Gastrocnemius medialis (tissue), 4 donors: ENCODE measurements at regions of chr22 and their contacts with region 1.

Region 1: GRCh38 chr22:28594797-28595462 is 84.7 kb downstream of the TTC28 start:
- DNase-seq: no peak
- ATAC-seq: peak; percentile 83 to 97
- H3K4me3 ChIP-seq: no peak overlapping the region
- H3K27ac ChIP-seq: no peak overlapping the region
- H3K4me1 ChIP-seq: no peaks in the 10 kb centered on the region
- H3K27me3 ChIP-seq: no peaks in the 10 kb centered on the region
- CTCF ChIP-seq: peak; percentile 68 to 89 (median 71)
- POLR2A ChIP-seq: no peak

Region 2: GRCh38 chr22:26756675-26757293 is 1838.1 kb before region 1 on chr22:
- in situ Hi-C with region 1: no loop called
- intact Hi-C with region 1: loop called (anchors 10 kb)
- DNase-seq: no peak
- ATAC-seq: peak; percentile 33 to 70
- H3K4me3 ChIP-seq: peak overlapping the region in 1 of 4 donors; percentile 32
- H3K27ac ChIP-seq: no peak overlapping the region
- H3K4me1 ChIP-seq: peaks cover 0 to 3% of the 10 kb centered on the region in 2 donors
- H3K27me3 ChIP-seq: no peaks in the 10 kb centered on the region
- CTCF ChIP-seq: peak; percentile 79 to 95 (median 88)
- POLR2A ChIP-seq: no peak

Region 3: GRCh38 chr22:27880778-27881394 is 714.0 kb before region 1 on chr22:
- in situ Hi-C with region 1: loop called (anchors 10 to 25 kb)
- intact Hi-C with region 1: loop called (anchors 10 kb)
- DNase-seq: no peak
- ATAC-seq: peak; percentile 81 to 85
- H3K4me3 ChIP-seq: no peak overlapping the region
- H3K27ac ChIP-seq: peak overlapping the region; percentile 26 to 43 (median 38)
- H3K4me1 ChIP-seq: peaks cover 17 to 30% of the 10 kb centered on the region in 2 donors
- H3K27me3 ChIP-seq: no peaks in the 10 kb centered on the region
- CTCF ChIP-seq: peak; percentile 76 to 85 (median 83)
- POLR2A ChIP-seq: no peak

Region 4: GRCh38 chr22:28051787-28052356 is 543.1 kb before region 1 on chr22:
- in situ Hi-C with region 1: loop called (anchors 5 to 10 kb)
- intact Hi-C with region 1: loop called (anchors 1 kb)
- DNase-seq: peak in 1 of 2 donors; percentile 62
- ATAC-seq: peak in 1 of 2 donors; percentile 72
- H3K4me3 ChIP-seq: no peak overlapping the region
- H3K27ac ChIP-seq: no peak overlapping the region
- H3K4me1 ChIP-seq: peaks cover 0 to 7% of the 10 kb centered on the region in 2 donors
- H3K27me3 ChIP-seq: no peaks in the 10 kb centered on the region
- CTCF ChIP-seq: peak; percentile 75 to 92 (median 83)
- POLR2A ChIP-seq: no peak